Ascending aorta (tissue), 2 donors: ENCODE measurements at regions of chr10 and their contacts with region 1.

Region 1: GRCh38 chr10:97400665-97401454 is at the start of gene RRP12:
- DNase-seq: peak; percentile 72 to 96
- H3K4me3 ChIP-seq: peak within 1 kb of the TSS; percentile 74 to 85
- H3K27ac ChIP-seq: peak within 1 kb of the TSS; percentile 79
- H3K4me1 ChIP-seq: peaks cover 7 to 9% of the 10 kb centered on the region in 2 donors
- H3K27me3 ChIP-seq: no peaks in the 10 kb centered on the region
- CTCF ChIP-seq: peak in 1 of 3 experiments; percentile 9
- total RNA-seq, gene RRP12: 5.9 TPM

Region 2: DNA sequence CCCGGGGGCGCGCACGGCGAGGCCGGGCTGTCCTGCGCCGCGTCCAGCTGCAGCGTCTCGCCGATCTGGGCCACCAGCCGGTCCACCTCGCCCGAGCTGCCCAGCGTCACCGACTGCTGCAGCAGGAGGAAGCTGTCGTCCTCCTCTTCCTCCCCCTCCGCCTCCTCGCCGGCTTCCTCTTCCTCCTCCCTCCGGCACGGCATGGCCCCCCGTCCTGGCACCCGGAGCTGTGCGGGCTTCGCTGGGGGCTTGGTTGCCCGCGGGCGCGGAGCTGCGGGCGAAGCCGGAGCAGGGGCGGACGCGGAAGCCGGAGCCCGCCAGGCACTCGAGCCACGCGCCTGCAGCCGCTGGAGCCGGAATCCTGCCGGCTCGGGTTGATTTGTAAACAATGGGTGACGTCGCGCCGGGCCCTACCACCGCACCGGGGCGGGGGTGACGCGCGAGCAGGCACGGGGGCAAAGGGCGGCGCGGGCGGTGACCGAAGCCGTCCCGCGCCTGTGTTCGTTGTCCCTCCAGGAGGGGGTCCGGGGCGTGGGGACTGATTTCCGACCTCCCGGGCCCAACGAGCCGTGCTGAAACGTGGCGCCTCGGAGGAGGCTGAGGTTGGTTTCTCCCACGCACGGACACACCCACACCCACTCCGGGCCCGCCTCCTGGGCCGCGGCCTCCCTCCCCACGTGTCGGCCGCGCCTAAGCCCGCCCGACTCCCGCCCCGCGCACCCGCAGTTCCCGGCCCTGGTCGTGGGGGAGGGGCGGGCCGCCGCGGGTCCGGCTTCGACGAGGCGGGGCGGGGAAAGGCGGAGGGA is 66.3 kb before region 1 on chr10 and contains the start of gene FRAT2:
- intact Hi-C with region 1: loop called (anchors 2 kb)
- DNase-seq: peak; percentile 61 to 94
- H3K4me3 ChIP-seq: peak within 1 kb of the TSS; percentile 73 to 98
- H3K27ac ChIP-seq: peak within 1 kb of the TSS; percentile 87 to 96
- H3K4me1 ChIP-seq: peaks cover 6 to 39% of the 10 kb centered on the region in 2 donors
- H3K27me3 ChIP-seq: no peaks in the 10 kb centered on the region
- CTCF ChIP-seq: no peak
- total RNA-seq, gene FRAT2: 32.0 TPM

Region 3: DNA sequence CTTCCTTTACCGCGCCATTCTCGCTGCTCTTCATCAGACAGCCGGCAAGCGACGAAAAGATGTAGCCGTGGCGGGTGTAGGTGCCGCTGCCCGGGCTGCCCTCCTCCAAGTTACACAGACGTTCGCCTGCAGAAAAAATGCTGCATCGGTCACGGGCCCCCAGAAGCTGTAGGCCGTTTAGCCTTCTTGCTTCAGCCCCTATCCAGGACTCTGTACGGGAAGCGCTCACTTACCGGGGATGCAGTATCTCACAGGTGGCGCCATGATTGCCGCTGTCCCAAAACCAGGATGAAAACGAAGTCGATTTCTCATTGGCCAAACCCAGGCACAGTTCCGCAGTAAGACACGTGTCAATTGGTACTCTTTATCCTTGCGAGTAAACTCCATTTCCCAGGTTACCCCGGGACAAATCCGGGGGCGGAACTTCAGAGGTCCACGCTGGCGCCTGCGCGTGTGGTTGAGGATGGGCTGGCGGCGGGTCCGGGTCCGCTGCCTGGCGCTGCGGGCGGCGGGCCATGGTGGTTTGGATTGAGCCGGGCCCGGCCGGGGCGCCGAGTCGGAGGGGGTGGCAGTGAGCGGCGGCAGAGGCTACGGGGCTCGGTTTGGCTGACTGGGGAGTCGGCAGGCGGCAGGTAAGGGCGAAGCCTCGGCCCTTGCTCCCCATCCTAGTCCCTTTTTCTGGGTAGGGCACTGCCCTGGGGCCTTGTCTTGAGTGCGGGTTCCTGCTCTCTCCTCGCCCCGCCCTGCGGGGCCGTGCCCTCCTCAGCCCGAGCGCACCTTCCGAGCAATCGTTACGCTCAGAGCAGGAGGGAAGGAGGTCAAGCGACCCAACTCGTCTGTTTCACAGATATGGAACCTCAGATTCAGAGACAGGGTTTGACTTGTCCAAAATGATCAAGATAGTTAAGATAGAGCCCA is 45.1 kb after region 1 on chr10 and contains the starts of genes EXOSC1 and ZDHHC16:
- intact Hi-C with region 1: loop called (anchors 2 kb)
- DNase-seq: peak; percentile 87 to 96
- H3K4me3 ChIP-seq: peak within 1 kb of the TSS; percentile 87 to 98
- H3K27ac ChIP-seq: peak within 1 kb of the TSS; percentile 41 to 66
- H3K4me1 ChIP-seq: peaks cover 7 to 30% of the 10 kb centered on the region in 2 donors
- H3K27me3 ChIP-seq: no peaks in the 10 kb centered on the region
- CTCF ChIP-seq: peak in 1 of 3 experiments; percentile 23
- total RNA-seq, gene EXOSC1: 11.3 TPM
- total RNA-seq, gene ZDHHC16: 30.4 TPM